Head of caudate nucleus (tissue), 42 donors: ENCODE measurements at regions of chr3 and their contacts with region 1.

Region 1: DNA sequence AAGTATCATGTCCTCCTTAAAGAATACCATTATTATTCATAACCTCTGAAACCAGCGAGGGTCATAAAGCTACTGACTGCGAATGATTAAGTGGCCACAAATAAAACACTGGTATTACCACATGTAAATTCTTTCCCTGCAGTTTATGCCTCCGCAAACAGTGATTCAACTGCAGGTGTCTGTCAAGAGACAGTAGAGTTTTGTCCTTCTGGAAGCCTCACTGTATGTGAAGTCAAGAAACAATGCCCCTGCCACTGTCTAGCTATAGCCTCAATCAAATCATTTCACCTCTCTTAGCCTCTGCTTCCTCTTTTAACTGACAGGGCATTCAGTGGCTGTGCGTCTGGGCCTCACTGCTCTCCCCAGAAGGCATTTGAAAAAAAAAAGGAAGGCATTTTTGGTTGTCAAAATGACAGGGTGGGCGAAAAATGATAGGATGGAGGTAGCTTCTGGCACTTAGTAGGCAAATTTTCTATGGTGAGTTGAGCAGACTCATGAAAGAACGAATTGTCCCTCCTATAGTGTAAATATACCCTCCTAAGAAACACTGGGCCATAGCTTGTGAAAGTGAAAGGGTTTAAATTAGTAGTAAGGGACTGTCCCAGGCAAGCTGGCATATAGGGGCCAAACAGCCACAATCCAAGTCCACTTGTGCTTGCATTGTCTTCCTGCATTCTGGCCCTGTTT is 66.7 kb downstream of the FILIP1L start:
- DNase-seq: no peak

Region 2: GRCh38 chr3:99842826-99843589 is 204.6 kb before region 1 on chr3:
- intact Hi-C with region 1: loop called (anchors 10 kb)
- DNase-seq: peak in 1 of 42 donors; percentile 25